ENCODE measurements at regions of chr7 and their contacts with region 1.

Region 1: DNA sequence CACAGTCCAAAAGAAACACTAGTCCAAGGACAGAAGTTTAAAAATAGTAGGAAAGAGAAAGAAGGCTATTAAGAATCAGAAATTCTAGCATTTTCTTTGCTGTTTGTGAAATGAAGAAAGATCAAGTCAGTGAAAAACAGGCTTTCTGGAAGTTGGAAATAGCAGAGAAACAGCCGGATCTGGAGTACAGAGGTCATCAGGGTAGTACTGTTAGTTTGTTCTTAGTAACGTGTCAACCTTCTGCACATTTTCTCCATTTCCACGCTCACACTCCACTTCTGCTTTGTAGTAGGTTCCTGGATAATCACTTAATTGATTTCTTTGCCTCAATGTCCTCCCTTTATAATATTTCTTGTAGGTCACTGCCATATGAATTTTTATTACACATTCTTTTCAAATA is 322.6 kb downstream of the PCLO start:
- DNase-seq: no peak
- H3K4me3 ChIP-seq: no peak overlapping the region
- H3K27me3 ChIP-seq: no peaks in the 10 kb centered on the region
- CTCF ChIP-seq: no peak

Region 2: GRCh38 chr7:82633592-82633991 is 206.5 kb before region 1 on chr7:
- CTCF ChIA-PET with region 1: no interaction called
- POLR2A ChIA-PET with region 1: no interaction called
- DNase-seq: no peak
- H3K4me3 ChIP-seq: no peak overlapping the region
- H3K27me3 ChIP-seq: no peaks in the 10 kb centered on the region; the same call in 1 of the 2 replicates
- CTCF ChIP-seq: no peak

Region 3: DNA sequence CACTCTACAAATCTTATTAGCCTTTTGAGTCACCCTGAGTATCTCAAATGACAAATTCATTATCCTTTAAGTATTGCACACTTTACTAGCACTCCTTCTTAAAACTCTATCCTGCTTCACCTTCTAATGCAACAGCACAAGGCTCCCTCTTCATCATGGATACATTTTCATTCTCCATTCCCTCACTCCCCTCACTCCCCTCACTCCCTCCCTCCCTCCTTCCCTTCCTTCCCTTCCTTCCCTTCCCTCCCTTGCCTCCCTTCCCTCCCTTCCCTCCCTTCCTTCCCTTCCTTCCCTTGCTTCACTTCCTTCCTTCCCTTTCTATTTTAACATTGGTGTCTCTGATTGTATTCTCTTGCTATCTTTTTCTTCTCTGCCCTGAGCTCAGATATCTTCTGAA is 192.1 kb after region 1 on chr7:
- CTCF ChIA-PET with region 1: no interaction called
- POLR2A ChIA-PET with region 1: interaction called, 15 read pairs
- DNase-seq: no peak
- H3K4me3 ChIP-seq: no peak overlapping the region
- H3K27me3 ChIP-seq: no peaks in the 10 kb centered on the region
- CTCF ChIP-seq: no peak

Measured in BJ (cell line).